ENCODE measurements at regions of chr12 and their contacts with region 1.

Region 1: DNA sequence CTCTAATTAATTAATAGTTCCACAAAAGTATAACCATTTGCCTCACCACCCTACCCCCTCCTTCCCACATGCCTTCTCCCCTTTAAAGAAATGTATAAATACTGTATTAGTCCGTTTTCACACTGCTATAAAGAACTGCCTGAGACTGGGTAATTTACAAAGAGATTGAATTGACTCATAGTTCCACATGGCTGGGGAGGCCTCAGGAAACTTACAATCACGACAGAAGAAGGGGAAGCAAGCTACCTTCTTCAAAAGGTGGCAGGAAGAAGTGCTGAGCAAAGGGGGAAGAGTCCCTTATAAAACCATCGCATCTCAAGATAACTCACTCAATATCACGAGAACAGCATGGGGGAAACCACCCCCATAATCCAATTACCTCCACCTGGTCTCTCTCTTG is 8.2 kb upstream of the RESF1 start:
- DNase-seq: peak; percentile 63
- H3K4me3 Mint-ChIP-seq: no peak overlapping the region
- H3K27ac Mint-ChIP-seq: peak overlapping the region; percentile 68
- H3K4me1 Mint-ChIP-seq: peaks cover 39% of the 10 kb centered on the region
- H3K27me3 Mint-ChIP-seq: no peaks in the 10 kb centered on the region

Region 2: DNA sequence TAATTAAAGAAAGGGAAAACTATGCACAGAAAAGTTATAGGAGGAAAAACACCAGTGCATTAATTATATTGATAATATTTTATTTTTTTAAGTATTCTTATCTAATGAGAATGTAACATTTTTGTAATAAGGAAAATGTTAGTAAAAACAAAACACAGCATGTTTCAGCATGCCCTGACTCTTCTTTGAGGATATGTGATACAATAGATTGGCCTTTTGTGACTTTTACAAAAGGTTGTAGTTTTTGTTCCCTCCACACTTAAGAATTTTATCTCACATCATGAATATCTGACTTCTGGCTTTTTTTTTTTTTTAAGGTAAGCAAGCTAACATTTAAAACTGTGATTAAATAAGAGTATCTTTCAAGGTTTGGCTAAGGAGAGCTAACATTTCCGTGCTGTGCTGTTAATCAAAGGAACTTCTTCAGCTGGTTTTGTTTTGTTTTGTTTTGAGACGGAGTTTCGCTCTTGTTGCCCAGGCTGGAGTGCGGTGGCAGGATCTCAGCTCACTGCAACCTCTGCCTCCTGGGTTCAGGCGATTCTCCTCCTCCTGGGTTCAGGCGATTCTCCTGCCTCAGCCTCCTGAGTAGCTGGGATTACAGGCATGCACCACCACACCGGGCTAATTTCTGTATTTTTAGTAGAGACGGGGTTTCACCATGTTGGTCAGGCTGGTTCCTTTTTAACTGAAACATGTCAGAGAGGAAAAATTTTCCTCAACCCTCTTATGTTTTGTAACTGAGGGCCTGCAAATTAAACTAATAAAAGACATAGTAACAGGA is 22.6 kb before region 1 on chr12:
- CTCF ChIA-PET with region 1: no interaction called
- intact Hi-C with region 1: loop called (anchors 2 kb)
- DNase-seq: peak; percentile 49
- H3K4me3 Mint-ChIP-seq: peak overlapping the region; percentile 78
- H3K27ac Mint-ChIP-seq: peak overlapping the region; percentile 97
- H3K4me1 Mint-ChIP-seq: peaks cover 38% of the 10 kb centered on the region
- H3K27me3 Mint-ChIP-seq: no peaks in the 10 kb centered on the region